A549 (cell line): ENCODE measurements at regions of chr17 and their contacts with region 1.

Region 1: GRCh38 chr17:57243171-57243948 is 13.0 kb upstream of the MSI2 start:
- DNase-seq: peak; percentile 77 to 88
- ATAC-seq: peak; percentile 83 to 95
- H3K4me3 ChIP-seq: no peak overlapping the region
- H3K27ac ChIP-seq: peak overlapping the region; percentile 15 to 47; a peak in 3 of 6 replicates
- H3K4me1 ChIP-seq: peaks cover 8% of the 10 kb centered on the region; the same call in 1 of the 3 replicates
- CTCF ChIP-seq: peak; percentile 100
- EP300 ChIP-seq: no peak
- POLR2A ChIP-seq: no peak
- RAD21 ChIP-seq: peak; percentile 99

Region 2: DNA sequence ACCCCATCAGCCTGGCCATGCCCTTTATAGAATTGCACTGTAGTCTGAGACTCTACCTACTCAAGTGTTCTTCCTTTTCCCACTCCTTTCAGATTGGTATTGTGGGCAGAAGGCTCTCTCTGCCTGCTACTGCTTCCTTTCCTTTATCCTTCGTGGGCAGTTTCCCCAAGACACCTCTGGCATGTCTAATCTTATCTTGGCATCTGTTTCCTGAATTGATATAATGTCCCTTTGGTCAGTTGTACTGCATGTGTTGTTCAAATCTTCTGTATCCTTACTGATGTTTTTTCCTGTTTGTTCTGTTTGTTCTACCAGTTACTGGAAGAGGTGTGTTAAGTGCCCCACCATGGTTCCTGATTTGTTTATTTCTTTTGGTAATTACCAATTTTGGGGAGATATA is 16.6 kb before region 1 on chr17:
- CTCF ChIA-PET with region 1: interaction called, 38 read pairs
- POLR2A ChIA-PET with region 1: no interaction called
- DNase-seq: no peak
- ATAC-seq: no peak
- H3K4me3 ChIP-seq: no peak overlapping the region
- H3K27ac ChIP-seq: no peak overlapping the region
- H3K4me1 ChIP-seq: no peaks in the 10 kb centered on the region
- CTCF ChIP-seq: no peak
- EP300 ChIP-seq: no peak
- POLR2A ChIP-seq: no peak
- RAD21 ChIP-seq: no peak

Region 3: GRCh38 chr17:57337390-57337789 is 94.0 kb after region 1 on chr17:
- CTCF ChIA-PET with region 1: interaction called, 12 read pairs
- POLR2A ChIA-PET with region 1: no interaction called
- DNase-seq: no peak
- ATAC-seq: no peak
- H3K4me3 ChIP-seq: no peak overlapping the region
- H3K27ac ChIP-seq: no peak overlapping the region
- H3K4me1 ChIP-seq: peaks cover under 1% of the 10 kb centered on the region; the same call in 1 of the 3 replicates
- CTCF ChIP-seq: no peak
- EP300 ChIP-seq: no peak
- POLR2A ChIP-seq: no peak
- RAD21 ChIP-seq: no peak

Region 4: GRCh38 chr17:57432520-57433277 is 189.3 kb after region 1 on chr17:
- CTCF ChIA-PET with region 1: interaction called, 16 read pairs
- POLR2A ChIA-PET with region 1: no interaction called
- DNase-seq: no peak
- ATAC-seq: no peak
- H3K4me3 ChIP-seq: no peak overlapping the region
- H3K27ac ChIP-seq: 0 out of 6 replicates have a peak overlapping the region, but pooled peaks of 1 of the 2 experiments have one; percentile 14
- H3K4me1 ChIP-seq: peaks cover 22% of the 10 kb centered on the region
- CTCF ChIP-seq: no peak; the same call in 2 of the 3 replicates
- EP300 ChIP-seq: no peak
- POLR2A ChIP-seq: no peak
- RAD21 ChIP-seq: no peak

Region 5: GRCh38 chr17:57507828-57508227 is 264.5 kb after region 1 on chr17:
- CTCF ChIA-PET with region 1: interaction called, 14 read pairs
- POLR2A ChIA-PET with region 1: no interaction called
- DNase-seq: no peak
- ATAC-seq: no peak
- H3K4me3 ChIP-seq: no peak overlapping the region
- H3K27ac ChIP-seq: peak overlapping the region in 1 of 2 experiments; percentile 9; a peak in 1 of 6 replicates
- H3K4me1 ChIP-seq: peaks cover 27% of the 10 kb centered on the region
- CTCF ChIP-seq: no peak
- EP300 ChIP-seq: no peak
- POLR2A ChIP-seq: no peak
- RAD21 ChIP-seq: no peak

Region 6: GRCh38 chr17:57724026-57724728 is 480.8 kb after region 1 on chr17:
- CTCF ChIA-PET with region 1: interaction called, 13 read pairs
- POLR2A ChIA-PET with region 1: no interaction called
- DNase-seq: no peak
- ATAC-seq: no peak; a peak in 1 of 6 replicates
- H3K4me3 ChIP-seq: no peak overlapping the region
- H3K27ac ChIP-seq: no peak overlapping the region
- H3K4me1 ChIP-seq: no peaks in the 10 kb centered on the region
- CTCF ChIP-seq: no peak
- EP300 ChIP-seq: no peak
- POLR2A ChIP-seq: no peak
- RAD21 ChIP-seq: no peak

Region 7: GRCh38 chr17:58112970-58113631 is 869.7 kb after region 1 on chr17:
- CTCF ChIA-PET with region 1: interaction called, 12 read pairs
- POLR2A ChIA-PET with region 1: no interaction called
- DNase-seq: peak; percentile 78 to 79
- ATAC-seq: peak; percentile 80 to 87
- H3K4me3 ChIP-seq: no peak overlapping the region
- H3K27ac ChIP-seq: no peak overlapping the region
- H3K4me1 ChIP-seq: no peaks in the 10 kb centered on the region
- CTCF ChIP-seq: peak; percentile 96
- EP300 ChIP-seq: no peak
- POLR2A ChIP-seq: no peak
- RAD21 ChIP-seq: peak; percentile 98 to 99